GM18951 (cell line): ENCODE measurements at regions of chr10 and their contacts with region 1.

Region 1: GRCh38 chr10:112140110-112140970 is 43.2 kb downstream of the GPAM start:
- POLR2A ChIP-seq: no peak

Region 2: GRCh38 chr10:112045938-112046337 is 94.4 kb before region 1 on chr10:
- in situ Hi-C with region 1: no loop called
- POLR2A ChIP-seq: no peak

Region 3: GRCh38 chr10:112314822-112315474 is 174.6 kb after region 1 on chr10:
- in situ Hi-C with region 1: loop called (anchors 25 kb)
- POLR2A ChIP-seq: no peak